ENCODE measurements at regions of chr10 and their contacts with region 1.

Region 1: DNA sequence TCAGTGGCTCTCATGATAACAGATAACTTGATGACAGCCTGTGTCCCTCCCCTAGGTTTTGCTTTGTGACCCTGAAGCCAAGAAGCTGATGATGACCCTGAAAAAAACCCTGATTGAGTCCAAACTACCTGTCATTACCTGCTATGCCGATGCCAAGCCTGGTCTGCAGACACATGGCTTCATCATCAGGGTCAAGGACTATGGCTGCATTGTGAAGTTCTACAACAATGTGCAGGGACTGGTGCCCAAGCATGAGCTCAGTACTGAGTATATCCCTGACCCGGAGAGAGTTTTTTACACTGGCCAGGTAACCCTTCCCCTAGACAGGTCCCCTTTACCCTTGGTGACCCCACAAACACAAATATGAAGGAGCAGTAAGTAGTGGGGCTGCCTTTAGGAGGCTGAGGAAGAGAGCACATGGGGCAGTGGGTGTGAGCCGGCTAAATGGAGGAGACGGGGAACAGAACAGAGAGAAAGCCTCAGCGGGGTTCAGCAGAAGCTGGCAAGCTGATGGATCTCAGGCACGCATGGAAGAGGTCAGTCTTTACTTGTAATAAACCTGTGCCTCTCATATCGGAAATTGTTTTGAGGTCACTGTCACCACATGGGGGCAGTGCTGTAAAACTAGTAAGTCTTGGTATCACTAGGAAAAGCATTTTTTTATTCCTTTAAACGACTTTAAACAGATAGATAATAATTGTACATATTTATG is 20.2 kb downstream of the PDCD11 start:
- H3K4me3 ChIP-seq: no peak overlapping the region
- H3K27ac ChIP-seq: no peak overlapping the region
- H3K4me1 ChIP-seq: no peaks in the 10 kb centered on the region
- CTCF ChIP-seq: peak; percentile 54; the same call in 1 of the 2 replicates

Region 2: GRCh38 chr10:103145860-103146466 is 270.6 kb before region 1 on chr10:
- CTCF ChIA-PET with region 1: no interaction called
- POLR2A ChIA-PET with region 1: no interaction called
- H3K4me3 ChIP-seq: no peak overlapping the region
- H3K27ac ChIP-seq: no peak overlapping the region
- H3K4me1 ChIP-seq: peaks cover 35% of the 10 kb centered on the region
- CTCF ChIP-seq: no peak

Region 3: DNA sequence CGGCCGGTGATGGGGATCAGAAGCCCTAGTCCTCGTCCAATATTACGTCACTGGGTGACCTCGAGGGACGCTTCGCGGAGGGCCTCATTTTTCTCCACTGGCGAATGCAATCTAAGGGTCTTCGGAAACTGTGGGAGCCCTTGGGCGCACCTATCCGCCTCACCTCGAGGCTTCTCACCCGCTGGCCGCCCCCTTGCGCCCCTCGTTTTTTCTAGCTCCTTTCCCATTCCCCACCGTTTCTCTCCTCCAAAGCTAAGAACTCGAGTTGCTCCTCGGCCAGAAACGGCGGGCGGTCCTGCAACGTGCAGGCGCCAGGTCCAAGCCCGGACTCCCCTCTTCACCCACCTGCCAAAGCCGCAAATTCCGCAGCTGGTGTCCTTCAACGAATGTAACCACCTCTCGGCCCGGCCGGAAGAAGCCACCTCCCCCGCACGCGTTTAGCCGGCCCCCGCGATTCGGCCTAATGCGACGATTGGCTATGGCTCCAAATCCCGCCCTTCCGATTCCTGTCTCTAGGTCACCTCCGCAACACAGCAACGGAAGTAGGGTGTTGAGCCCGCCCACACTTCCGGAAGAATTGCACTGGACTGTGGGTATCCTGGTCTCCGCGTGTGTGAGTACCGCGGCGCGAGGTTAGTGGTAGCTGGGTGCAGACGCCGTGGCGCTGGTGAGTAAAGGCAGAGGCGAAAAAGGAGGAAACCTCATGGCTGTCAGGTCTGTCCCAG is 20.4 kb before region 1 on chr10 and contains the starts of genes ATP5MK and PDCD11:
- CTCF ChIA-PET with region 1: interaction called, 14 read pairs
- POLR2A ChIA-PET with region 1: no interaction called
- H3K4me3 ChIP-seq: peak within 1 kb of the TSS; percentile 55
- H3K27ac ChIP-seq: peak within 1 kb of the TSS; percentile 74
- H3K4me1 ChIP-seq: peaks cover 6% of the 10 kb centered on the region
- CTCF ChIP-seq: peak; percentile 86

Region 4: GRCh38 chr10:103476046-103476995 is 59.7 kb after region 1 on chr10:
- CTCF ChIA-PET with region 1: interaction called, 12 read pairs
- POLR2A ChIA-PET with region 1: no interaction called
- H3K4me3 ChIP-seq: no peak overlapping the region
- H3K27ac ChIP-seq: no peak overlapping the region
- H3K4me1 ChIP-seq: no peaks in the 10 kb centered on the region
- CTCF ChIP-seq: no peak

Region 5: DNA sequence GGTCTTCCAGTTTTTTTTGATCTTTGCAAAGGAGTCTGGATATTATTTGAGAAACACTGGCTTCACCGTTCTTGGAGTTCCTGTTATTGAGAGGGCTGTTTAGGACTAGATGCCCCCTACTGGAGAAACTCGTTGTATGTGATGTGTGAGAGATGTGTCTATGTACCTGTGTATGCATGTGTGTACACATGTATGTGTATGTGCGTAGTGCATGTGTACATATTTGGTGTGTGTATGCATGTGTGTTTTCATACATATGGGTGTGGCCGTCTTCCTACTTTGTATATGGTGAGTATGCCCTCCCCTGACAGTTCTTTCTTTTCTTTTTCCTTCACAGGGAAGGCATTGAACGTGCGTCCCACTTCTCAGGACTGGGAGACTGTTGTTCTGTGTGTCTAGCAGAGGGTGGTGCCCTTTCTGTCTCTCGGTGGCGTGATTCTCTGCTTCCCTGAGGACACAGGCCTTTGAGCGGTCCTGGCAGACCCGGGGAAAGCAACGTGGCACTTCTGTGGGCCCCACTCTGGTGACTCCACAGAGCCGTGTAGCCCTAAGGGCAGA is 65.5 kb after region 1 on chr10:
- CTCF ChIA-PET with region 1: interaction called, 58 read pairs
- POLR2A ChIA-PET with region 1: no interaction called
- H3K4me3 ChIP-seq: no peak overlapping the region
- H3K27ac ChIP-seq: no peak overlapping the region
- H3K4me1 ChIP-seq: no peaks in the 10 kb centered on the region
- CTCF ChIP-seq: peak; percentile 46; the same call in 1 of the 2 replicates

Region 6: GRCh38 chr10:103491493-103492381 is 75.1 kb after region 1 on chr10:
- CTCF ChIA-PET with region 1: interaction called, 58 read pairs
- POLR2A ChIA-PET with region 1: interaction called, 4 read pairs
- H3K4me3 ChIP-seq: no peak overlapping the region
- H3K27ac ChIP-seq: no peak overlapping the region
- H3K4me1 ChIP-seq: no peaks in the 10 kb centered on the region
- CTCF ChIP-seq: no peak

Region 7: GRCh38 chr10:103592186-103593021 is 175.8 kb after region 1 on chr10:
- CTCF ChIA-PET with region 1: interaction called, 10 read pairs
- POLR2A ChIA-PET with region 1: no interaction called
- H3K4me3 ChIP-seq: no peak overlapping the region
- H3K27ac ChIP-seq: no peak overlapping the region
- H3K4me1 ChIP-seq: no peaks in the 10 kb centered on the region
- CTCF ChIP-seq: peak; percentile 79